ENCODE measurements at regions of chr16 and their contacts with region 1.

Region 1: DNA sequence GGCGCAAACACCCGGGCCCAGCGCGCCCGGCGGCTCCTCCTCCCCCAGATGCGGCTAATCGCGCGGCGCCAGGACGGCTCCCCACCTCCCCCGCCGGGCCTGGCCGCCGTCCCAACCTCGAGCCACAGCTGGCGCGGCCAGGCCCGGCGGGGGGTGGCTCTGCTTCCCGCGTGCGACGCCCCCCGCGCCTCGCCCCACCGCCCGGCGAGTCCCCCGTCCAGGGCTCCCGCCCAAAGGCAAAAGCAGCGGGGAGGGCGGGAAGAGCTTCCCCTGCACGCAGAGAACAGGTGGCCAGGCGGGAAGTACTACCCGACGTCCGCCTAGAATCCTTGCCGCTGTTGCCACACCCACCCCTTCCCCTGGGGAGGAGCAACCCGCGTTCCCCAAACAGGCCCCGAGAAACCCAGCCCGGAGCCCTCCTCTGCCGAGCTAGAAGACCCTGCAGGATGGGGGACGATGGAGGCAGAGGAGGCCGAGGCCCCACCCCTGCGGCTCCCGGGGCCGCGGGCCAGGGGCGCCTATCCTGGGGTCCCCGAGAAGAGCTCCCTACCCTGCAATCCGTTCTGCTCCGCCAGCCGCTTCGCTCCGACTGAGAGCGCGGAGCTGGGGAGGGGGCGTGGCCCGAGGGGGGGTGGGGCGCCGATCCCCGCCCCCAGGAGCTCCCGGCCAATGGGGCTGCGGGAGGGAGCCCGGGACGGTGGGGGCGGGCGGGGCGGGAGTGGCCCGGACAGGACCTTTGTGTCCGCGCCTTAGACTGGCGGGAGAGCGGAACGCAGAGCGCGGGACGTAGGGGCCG is at the start of gene CARHSP1:
- DNase-seq: peak; percentile 89
- ATAC-seq: peak; percentile 85
- H3K4me3 ChIP-seq: peak within 1 kb of the TSS; percentile 76 to 89 (median 84)
- H3K4me3 Mint-ChIP-seq: peak within 1 kb of the TSS; percentile 94
- H3K27ac ChIP-seq: peak within 1 kb of the TSS; percentile 66 to 78
- H3K27ac Mint-ChIP-seq: peak within 1 kb of the TSS; percentile 93
- H3K4me1 ChIP-seq: peaks cover 34 to 68% of the 10 kb centered on the region in 2 donors
- H3K4me1 Mint-ChIP-seq: peaks cover 56% of the 10 kb centered on the region
- H3K27me3 ChIP-seq: no peaks in the 10 kb centered on the region
- H3K27me3 Mint-ChIP-seq: no peaks in the 10 kb centered on the region
- CTCF ChIP-seq: no peak
- total RNA-seq, gene CARHSP1: 63.1 and 64.2 TPM in 2 replicates

Region 2: GRCh38 chr16:8567750-8568617 is 300.6 kb before region 1 on chr16:
- CTCF ChIA-PET with region 1: interaction called, 3 read pairs
- POLR2A ChIA-PET with region 1: no interaction called
- intact Hi-C with region 1: loop called (anchors 5 kb)
- DNase-seq: peak; percentile 86
- ATAC-seq: peak; percentile 93
- H3K4me3 ChIP-seq: no peak overlapping the region
- H3K4me3 Mint-ChIP-seq: no peak overlapping the region
- H3K27ac ChIP-seq: no peak overlapping the region
- H3K27ac Mint-ChIP-seq: peak overlapping the region; percentile 34
- H3K4me1 ChIP-seq: peaks cover 0 to 6% of the 10 kb centered on the region in 2 donors
- H3K4me1 Mint-ChIP-seq: peaks cover 7% of the 10 kb centered on the region
- H3K27me3 ChIP-seq: peaks cover 0 to 3% (median 0%) of the 10 kb centered on the region in 4 experiments
- H3K27me3 Mint-ChIP-seq: peaks cover 16% of the 10 kb centered on the region
- CTCF ChIP-seq: peak; percentile 100

Region 3: GRCh38 chr16:8644211-8645140 is 224.1 kb before region 1 on chr16:
- CTCF ChIA-PET with region 1: no interaction called
- POLR2A ChIA-PET with region 1: no interaction called
- intact Hi-C with region 1: no loop called
- DNase-seq: peak; percentile 15
- ATAC-seq: peak; percentile 53
- H3K4me3 ChIP-seq: peak overlapping the region in 1 of 5 experiments; percentile 54
- H3K4me3 Mint-ChIP-seq: no peak overlapping the region
- H3K27ac ChIP-seq: peak overlapping the region in 1 of 2 donors; percentile 52
- H3K27ac Mint-ChIP-seq: peak overlapping the region; percentile 35
- H3K4me1 ChIP-seq: peaks cover 5% of the 10 kb centered on the region in 2 donors
- H3K4me1 Mint-ChIP-seq: peaks cover 9% of the 10 kb centered on the region
- H3K27me3 ChIP-seq: no peaks in the 10 kb centered on the region
- H3K27me3 Mint-ChIP-seq: no peaks in the 10 kb centered on the region
- CTCF ChIP-seq: no peak

Region 4: GRCh38 chr16:8797364-8798173 is 71.0 kb before region 1 on chr16 and contains the starts of genes PMM2 and TMEM186:
- CTCF ChIA-PET with region 1: interaction called, 4 read pairs
- POLR2A ChIA-PET with region 1: interaction called, 4 read pairs
- intact Hi-C with region 1: loop called (anchors 1 kb)
- DNase-seq: peak; percentile 97
- ATAC-seq: peak; percentile 97
- H3K4me3 ChIP-seq: peak within 1 kb of the TSS; percentile 69 to 98 (median 73)
- H3K4me3 Mint-ChIP-seq: peak within 1 kb of the TSS; percentile 97
- H3K27ac ChIP-seq: peak within 1 kb of the TSS; percentile 69 to 91
- H3K27ac Mint-ChIP-seq: peak within 1 kb of the TSS; percentile 95
- H3K4me1 ChIP-seq: peaks cover 29 to 31% of the 10 kb centered on the region in 2 donors
- H3K4me1 Mint-ChIP-seq: peaks cover 34% of the 10 kb centered on the region
- H3K27me3 ChIP-seq: no peaks in the 10 kb centered on the region
- H3K27me3 Mint-ChIP-seq: no peaks in the 10 kb centered on the region
- CTCF ChIP-seq: no peak
- total RNA-seq, gene PMM2: 45.3 and 47.5 TPM in 2 replicates
- total RNA-seq, gene TMEM186: 13.9 and 16.7 TPM in 2 replicates

Region 5: DNA sequence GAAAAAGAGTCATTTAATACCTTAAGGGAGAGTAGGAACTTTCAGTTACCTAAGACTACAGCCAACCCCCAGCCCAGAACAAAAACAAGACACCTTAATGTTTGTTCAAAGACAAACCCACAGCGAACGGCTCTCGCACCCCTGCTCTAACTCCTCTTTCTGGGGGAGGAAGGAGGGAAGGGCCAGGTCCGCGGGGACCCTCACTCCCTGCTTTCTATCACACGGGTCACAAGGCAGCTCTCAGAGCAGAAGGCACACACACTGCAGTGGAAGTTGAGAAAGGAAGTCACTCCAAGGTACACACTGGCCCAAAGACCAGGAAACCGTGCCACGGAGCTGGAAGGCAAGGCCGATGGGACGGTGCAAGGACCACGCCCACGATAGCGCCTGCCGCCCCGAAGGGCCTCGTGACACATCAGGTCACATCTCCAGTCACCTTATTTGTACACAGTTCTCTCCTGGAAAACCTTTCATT is 23.5 kb after region 1 on chr16:
- CTCF ChIA-PET with region 1: interaction called, 11 read pairs
- POLR2A ChIA-PET with region 1: interaction called, 9 read pairs
- intact Hi-C with region 1: loop called (anchors 1 kb)
- DNase-seq: peak; percentile 53
- ATAC-seq: no peak
- H3K4me3 ChIP-seq: no peak overlapping the region
- H3K4me3 Mint-ChIP-seq: peak overlapping the region; percentile 68
- H3K27ac ChIP-seq: peak overlapping the region; percentile 41 to 86
- H3K27ac Mint-ChIP-seq: peak overlapping the region; percentile 95
- H3K4me1 ChIP-seq: peaks cover 18 to 40% of the 10 kb centered on the region in 2 donors
- H3K4me1 Mint-ChIP-seq: peaks cover 36% of the 10 kb centered on the region
- H3K27me3 ChIP-seq: no peaks in the 10 kb centered on the region
- H3K27me3 Mint-ChIP-seq: no peaks in the 10 kb centered on the region
- CTCF ChIP-seq: no peak

Region 6: DNA sequence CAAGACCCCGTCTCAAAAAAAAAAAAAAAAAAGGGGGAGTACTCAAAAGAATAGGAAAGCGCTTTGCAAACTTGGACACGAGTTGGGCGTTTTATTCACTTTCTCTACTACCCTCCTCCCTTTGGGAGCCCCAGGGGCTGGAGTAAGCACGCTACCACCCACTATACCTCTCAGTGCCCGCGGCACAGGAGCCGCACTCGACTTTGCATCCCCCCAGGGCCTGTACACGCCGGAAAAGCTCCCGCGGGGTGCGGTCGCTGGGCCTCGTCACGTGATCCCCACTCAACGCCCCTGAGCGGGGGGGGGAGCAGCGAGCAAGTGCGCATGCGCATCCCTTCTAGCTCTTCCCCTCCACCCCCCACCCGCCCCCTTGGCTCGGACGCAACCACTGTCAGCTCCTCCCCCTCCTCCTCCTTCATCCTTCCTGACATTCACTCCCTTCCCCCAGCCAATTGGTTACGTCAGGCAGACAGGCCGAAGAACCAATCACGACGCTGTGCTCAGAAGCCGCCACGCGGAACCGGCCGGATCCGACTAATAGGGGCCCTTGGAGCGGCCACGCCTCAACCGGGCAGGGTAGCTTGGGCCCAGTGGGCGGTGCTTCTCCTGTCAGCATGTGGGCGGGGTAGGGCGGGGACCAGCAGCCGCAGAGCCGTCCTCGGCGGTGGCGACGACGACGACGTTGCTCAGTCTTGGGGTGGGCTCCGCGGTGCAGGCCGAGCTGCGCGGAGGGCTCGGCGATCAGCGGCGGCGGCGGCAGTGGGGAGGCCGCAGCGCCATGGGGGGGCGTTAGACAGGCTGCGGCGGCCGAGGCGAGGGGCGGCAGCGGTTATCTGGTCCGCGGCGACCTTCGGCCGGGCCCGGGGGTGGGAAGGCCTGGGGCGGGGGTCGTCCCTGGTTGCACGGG is 222.6 kb after region 1 on chr16 and contains the start of gene HAPSTR1:
- CTCF ChIA-PET with region 1: interaction called, 4 read pairs
- POLR2A ChIA-PET with region 1: interaction called, 5 read pairs
- intact Hi-C with region 1: loop called (anchors 1 kb)
- DNase-seq: peak; percentile 100
- ATAC-seq: peak; percentile 84
- H3K4me3 ChIP-seq: peak within 1 kb of the TSS; percentile 84 to 95 (median 88)
- H3K4me3 Mint-ChIP-seq: peak within 1 kb of the TSS; percentile 97
- H3K27ac ChIP-seq: peak within 1 kb of the TSS; percentile 90 to 98
- H3K27ac Mint-ChIP-seq: peak within 1 kb of the TSS; percentile 98
- H3K4me1 ChIP-seq: peaks cover 31 to 37% of the 10 kb centered on the region in 2 donors
- H3K4me1 Mint-ChIP-seq: peaks cover 38% of the 10 kb centered on the region
- H3K27me3 ChIP-seq: no peaks in the 10 kb centered on the region
- H3K27me3 Mint-ChIP-seq: no peaks in the 10 kb centered on the region
- CTCF ChIP-seq: no peak
- total RNA-seq, gene HAPSTR1: 99.2 and 101 TPM in 2 replicates

Region 7: DNA sequence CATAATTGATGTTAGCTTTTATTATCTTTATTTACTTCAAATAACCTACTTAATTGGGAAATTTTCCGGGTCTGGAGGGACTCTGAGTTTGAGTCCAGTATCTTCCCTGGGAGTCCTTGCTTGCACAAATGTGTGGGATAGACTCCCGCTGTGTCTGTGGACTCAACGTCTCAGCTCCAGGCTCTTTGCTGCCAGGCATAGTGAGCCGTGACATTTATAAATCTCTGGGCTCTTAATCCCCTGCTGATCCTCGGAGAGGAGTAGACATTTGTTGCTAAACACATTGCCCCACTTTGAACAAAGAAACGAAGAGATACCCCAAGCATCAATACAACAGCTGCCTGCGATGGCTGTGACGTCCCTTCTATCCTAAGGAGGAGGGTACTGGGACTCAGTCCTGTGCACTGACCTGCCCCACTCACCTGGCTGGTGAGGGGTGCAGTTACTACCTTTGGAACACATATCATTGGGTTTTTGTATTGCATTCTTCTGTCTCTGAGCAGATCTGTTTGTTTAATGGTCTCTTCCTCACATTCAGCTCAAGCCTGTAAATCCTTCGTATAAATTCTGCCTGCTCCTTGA is 539.8 kb after region 1 on chr16:
- CTCF ChIA-PET with region 1: no interaction called
- POLR2A ChIA-PET with region 1: no interaction called
- intact Hi-C with region 1: no loop called
- DNase-seq: no peak
- ATAC-seq: no peak
- H3K4me3 ChIP-seq: no peak overlapping the region
- H3K4me3 Mint-ChIP-seq: no peak overlapping the region
- H3K27ac ChIP-seq: no peak overlapping the region
- H3K27ac Mint-ChIP-seq: no peak overlapping the region
- H3K4me1 ChIP-seq: no peaks in the 10 kb centered on the region
- H3K4me1 Mint-ChIP-seq: no peaks in the 10 kb centered on the region
- H3K27me3 ChIP-seq: peaks cover 0 to 3% (median 0%) of the 10 kb centered on the region in 4 experiments
- H3K27me3 Mint-ChIP-seq: peaks cover 14% of the 10 kb centered on the region
- CTCF ChIP-seq: no peak